Activated CD4-positive, alpha-beta T cell treated with anti-CD3 and anti-CD28 coated beads, Interleukin-2, amount 10 ng/mL, durations not matched to agents 7 days and 5 days (primary cell): ENCODE measurements at regions of chr2 and their contacts with region 1.

Region 1: DNA sequence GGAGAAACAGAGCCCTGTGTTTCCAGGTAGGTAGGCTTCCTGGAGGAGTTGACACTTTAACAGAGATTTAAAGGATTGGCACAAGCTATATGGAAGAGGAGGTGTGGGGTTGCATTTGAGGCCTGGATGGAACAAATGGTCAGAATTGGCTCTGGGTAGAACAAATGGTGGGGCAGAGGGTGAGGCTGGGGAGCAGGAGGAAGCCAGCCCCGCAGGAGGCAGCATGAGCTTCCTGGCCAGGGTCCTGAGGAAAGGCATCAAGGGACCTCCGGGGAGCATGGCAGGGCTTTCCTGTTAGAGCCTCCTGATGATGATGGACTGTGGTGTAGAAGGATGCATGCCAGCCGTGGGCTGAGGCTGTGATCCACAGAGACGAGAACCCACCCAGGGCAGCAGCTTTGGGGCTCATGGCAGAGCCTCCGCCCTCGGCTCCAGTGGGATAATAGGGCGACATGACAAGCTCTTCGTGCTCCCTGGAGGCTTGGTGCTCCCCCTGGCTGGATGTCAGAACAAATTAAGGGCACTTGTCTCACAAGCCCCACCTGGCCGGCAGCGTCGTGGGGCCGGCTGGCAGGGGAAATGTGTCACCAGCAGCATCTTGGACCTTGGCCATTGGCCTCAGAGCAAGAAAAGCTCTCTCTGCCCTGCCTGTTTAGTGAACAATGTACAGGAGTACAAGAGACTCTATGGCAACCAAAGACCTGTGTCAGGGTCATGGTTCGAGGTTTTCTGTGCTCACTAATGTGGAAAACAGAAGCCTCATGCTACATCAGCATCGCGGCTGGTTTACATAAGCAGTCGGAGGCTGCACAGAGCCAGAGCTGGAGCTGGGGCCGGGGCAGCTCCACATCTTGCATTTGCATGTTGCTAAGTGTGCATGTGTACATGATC is 153.5 kb downstream of the MYCN start:
- DNase-seq: no peak
- H3K4me3 Mint-ChIP-seq: no peak overlapping the region
- H3K27ac Mint-ChIP-seq: no peak overlapping the region
- H3K4me1 Mint-ChIP-seq: no peaks in the 10 kb centered on the region
- H3K27me3 Mint-ChIP-seq: no peaks in the 10 kb centered on the region

Region 2: DNA sequence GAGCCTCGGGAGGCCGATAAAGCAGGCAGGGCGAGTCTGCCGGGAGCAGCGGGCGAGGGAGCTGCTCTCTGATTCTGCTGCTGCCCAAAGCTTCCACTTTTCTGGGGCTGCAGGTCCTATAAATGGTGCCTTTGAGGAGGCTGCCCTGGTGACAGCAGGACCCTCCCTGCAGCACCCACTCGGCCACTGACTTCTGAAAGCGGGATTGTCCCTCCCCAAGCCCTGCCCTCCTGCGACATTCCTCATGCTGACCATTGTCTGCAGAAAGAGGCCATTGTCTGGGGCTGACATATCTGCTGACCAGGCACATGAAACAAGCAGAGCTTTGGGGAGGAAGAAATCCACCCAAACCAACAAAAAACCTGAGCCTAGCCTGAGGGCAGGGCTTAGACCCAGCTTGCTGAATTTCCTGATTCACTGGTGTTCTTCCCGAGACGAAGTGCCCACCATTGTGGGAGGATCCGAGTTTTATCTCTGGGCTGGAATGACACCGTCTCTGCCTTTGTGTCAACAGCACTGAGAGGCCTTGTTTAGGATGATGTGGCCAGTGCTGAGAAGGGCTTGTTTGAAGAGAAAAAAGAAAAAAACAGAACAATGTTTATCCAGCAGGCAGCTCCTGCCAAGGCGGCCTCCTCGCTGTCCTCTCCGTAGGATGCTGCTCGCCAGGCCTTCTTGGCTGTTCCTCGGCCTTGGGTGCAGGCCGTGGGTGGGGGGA is 23.8 kb before region 1 on chr2:
- CTCF ChIA-PET with region 1: no interaction called
- POLR2A ChIA-PET with region 1: no interaction called
- DNase-seq: no peak
- H3K4me3 Mint-ChIP-seq: no peak overlapping the region
- H3K27ac Mint-ChIP-seq: no peak overlapping the region
- H3K4me1 Mint-ChIP-seq: no peaks in the 10 kb centered on the region
- H3K27me3 Mint-ChIP-seq: no peaks in the 10 kb centered on the region

Region 3: DNA sequence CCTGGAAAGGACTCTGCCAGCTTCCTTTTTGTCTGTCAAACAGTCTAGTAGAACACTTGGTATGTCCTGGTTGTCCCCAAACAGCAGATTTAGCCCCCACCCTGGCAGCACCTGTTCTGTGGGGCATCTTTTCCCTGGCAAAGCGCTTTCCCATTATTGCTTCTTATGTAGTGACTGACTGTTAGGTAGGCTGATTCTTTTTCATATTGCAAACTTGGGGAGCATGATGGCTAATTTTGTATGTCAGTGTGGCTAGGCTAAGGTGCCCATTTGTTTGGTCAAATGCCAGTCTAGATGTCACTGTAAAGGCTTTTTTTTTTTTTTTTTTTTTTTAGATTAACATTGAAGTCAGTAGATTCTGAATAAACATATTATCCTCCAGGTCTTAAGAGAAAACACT is 13.4 kb before region 1 on chr2:
- CTCF ChIA-PET with region 1: no interaction called
- POLR2A ChIA-PET with region 1: interaction called, 13 read pairs
- DNase-seq: no peak
- H3K4me3 Mint-ChIP-seq: no peak overlapping the region
- H3K27ac Mint-ChIP-seq: no peak overlapping the region
- H3K4me1 Mint-ChIP-seq: no peaks in the 10 kb centered on the region
- H3K27me3 Mint-ChIP-seq: no peaks in the 10 kb centered on the region